ENCODE measurements at regions of chr2 and their contacts with region 1.

Region 1: GRCh38 chr2:213166109-213166508 is 14.7 kb upstream of the IKZF2 start:
- DNase-seq: no peak
- ATAC-seq: no peak
- H3K4me3 ChIP-seq: no peak overlapping the region
- H3K27ac ChIP-seq: no peak overlapping the region
- H3K4me1 ChIP-seq: peaks cover 0 to 4% of the 10 kb centered on the region in 2 donors
- H3K27me3 ChIP-seq: no peaks in the 10 kb centered on the region

Region 2: DNA sequence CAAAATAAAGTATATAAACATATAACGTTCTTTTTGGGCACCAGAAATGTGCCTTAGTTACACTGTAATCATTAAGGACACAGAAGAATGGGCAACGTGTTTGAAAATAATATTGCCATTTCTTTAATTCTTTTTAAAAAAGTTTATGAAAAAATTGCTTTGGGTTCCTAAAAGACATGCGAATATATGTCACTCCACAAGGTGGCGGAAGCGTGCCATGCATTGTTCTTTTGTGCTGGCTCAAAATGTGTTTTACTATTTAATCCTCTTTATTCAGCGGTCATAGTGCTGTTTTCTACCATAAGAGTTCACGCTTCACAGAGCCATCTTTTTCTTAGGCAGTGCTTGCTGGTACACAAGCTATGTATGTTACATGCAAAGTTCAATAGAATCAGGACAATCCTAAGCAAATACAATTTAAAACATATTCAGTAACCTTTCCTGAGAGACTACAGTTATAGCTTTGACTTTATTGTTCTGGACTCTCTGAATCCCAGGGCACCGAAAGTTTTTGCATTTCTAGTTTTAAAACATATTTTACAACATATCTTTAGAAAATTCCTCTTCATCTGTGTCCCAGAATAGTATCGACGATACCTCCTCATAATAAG is 479.7 kb before region 1 on chr2:
- intact Hi-C with region 1: loop called in 1 of 2 experiments (anchors 10 kb)
- DNase-seq: peak; percentile 57 to 80
- ATAC-seq: peak; percentile 77
- H3K4me3 ChIP-seq: no peak overlapping the region
- H3K27ac ChIP-seq: no peak overlapping the region
- H3K4me1 ChIP-seq: no peaks in the 10 kb centered on the region
- H3K27me3 ChIP-seq: no peaks in the 10 kb centered on the region

Region 3: DNA sequence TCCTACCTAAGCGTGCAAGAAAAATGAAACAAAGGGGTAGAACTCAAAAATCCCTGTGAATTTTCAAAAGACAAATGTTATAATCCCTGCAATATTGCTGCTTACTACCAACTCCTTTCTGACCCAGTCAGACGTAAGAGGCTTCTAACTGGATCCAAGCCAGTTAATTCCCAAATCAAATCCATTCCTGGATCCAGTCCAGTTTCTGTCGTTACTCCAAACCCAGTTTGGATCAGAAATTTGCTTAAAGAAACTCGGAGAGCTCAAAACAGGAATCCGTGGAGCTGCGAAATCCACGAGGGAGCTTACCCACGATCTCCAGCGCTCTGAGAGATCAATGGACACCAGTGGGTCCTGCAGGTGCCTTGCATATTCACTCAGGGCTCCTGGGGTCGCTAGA is 48.1 kb after region 1 on chr2:
- intact Hi-C with region 1: loop called in 1 of 2 experiments (anchors 5 kb)
- DNase-seq: no peak
- ATAC-seq: no peak
- H3K4me3 ChIP-seq: no peak overlapping the region
- H3K27ac ChIP-seq: no peak overlapping the region
- H3K4me1 ChIP-seq: peaks cover 2 to 3% of the 10 kb centered on the region in 2 donors
- H3K27me3 ChIP-seq: no peaks in the 10 kb centered on the region